ENCODE measurements at regions of chr11 and their contacts with region 1.

Region 1: GRCh38 chr11:64878494-64879243 is at the start of gene EHD1:
- DNase-seq: peak; percentile 97 to 98
- ATAC-seq: peak; percentile 77 to 89
- H3K4me3 ChIP-seq: peak within 1 kb of the TSS; percentile 90
- H3K27ac ChIP-seq: peak within 1 kb of the TSS; percentile 92 to 97
- H3K4me1 ChIP-seq: peaks cover 24% of the 10 kb centered on the region
- CTCF ChIP-seq: peak; percentile 69
- EP300 ChIP-seq: no peak
- POLR2A ChIP-seq: peak; percentile 95
- RAD21 ChIP-seq: peak; percentile 26 to 66; a peak in 4 of 5 replicates
- polyA plus RNA-seq, gene EHD1: 25.9 and 27.7 TPM in 2 replicates

Region 2: GRCh38 chr11:64854534-64855429 is 23.9 kb before region 1 on chr11:
- CTCF ChIA-PET with region 1: interaction called, 1,607 read pairs
- POLR2A ChIA-PET with region 1: interaction called, 27 read pairs
- DNase-seq: peak; percentile 97
- ATAC-seq: peak; percentile 85 to 91
- H3K4me3 ChIP-seq: peak overlapping the region; percentile 10; the same call in 1 of the 3 replicates
- H3K27ac ChIP-seq: peak overlapping the region; percentile 91 to 92
- H3K4me1 ChIP-seq: peaks cover 78% of the 10 kb centered on the region
- CTCF ChIP-seq: no peak
- EP300 ChIP-seq: peak; percentile 65 to 82; a peak in 3 of 5 replicates
- POLR2A ChIP-seq: no peak
- RAD21 ChIP-seq: peak; percentile 29 to 30; a peak in 4 of 5 replicates

Region 3: GRCh38 chr11:64864473-64865285 is 14.0 kb before region 1 on chr11:
- CTCF ChIA-PET with region 1: interaction called, 1,607 read pairs
- POLR2A ChIA-PET with region 1: interaction called, 25 read pairs
- DNase-seq: no peak
- ATAC-seq: no peak
- H3K4me3 ChIP-seq: no peak overlapping the region
- H3K27ac ChIP-seq: peak overlapping the region; percentile 22 to 73; a peak in 5 of 6 replicates
- H3K4me1 ChIP-seq: peaks cover 54% of the 10 kb centered on the region
- CTCF ChIP-seq: no peak
- EP300 ChIP-seq: no peak
- POLR2A ChIP-seq: no peak
- RAD21 ChIP-seq: no peak

Measured in A549 (cell line).